KBM-7 (cell line): ENCODE measurements at regions of chr2 and their contacts with region 1.

Region 1: GRCh38 chr2:181715033-181715630 is 34.8 kb upstream of the NEUROD1 start:
- DNase-seq: peak; percentile 89

Region 2: GRCh38 chr2:180776921-180777320 is 938.2 kb before region 1 on chr2:
- in situ Hi-C with region 1: no loop called
- DNase-seq: no peak

Region 3: GRCh38 chr2:181085734-181086133 is 629.4 kb before region 1 on chr2:
- in situ Hi-C with region 1: loop called (anchors 10 kb)
- DNase-seq: no peak

Region 4: DNA sequence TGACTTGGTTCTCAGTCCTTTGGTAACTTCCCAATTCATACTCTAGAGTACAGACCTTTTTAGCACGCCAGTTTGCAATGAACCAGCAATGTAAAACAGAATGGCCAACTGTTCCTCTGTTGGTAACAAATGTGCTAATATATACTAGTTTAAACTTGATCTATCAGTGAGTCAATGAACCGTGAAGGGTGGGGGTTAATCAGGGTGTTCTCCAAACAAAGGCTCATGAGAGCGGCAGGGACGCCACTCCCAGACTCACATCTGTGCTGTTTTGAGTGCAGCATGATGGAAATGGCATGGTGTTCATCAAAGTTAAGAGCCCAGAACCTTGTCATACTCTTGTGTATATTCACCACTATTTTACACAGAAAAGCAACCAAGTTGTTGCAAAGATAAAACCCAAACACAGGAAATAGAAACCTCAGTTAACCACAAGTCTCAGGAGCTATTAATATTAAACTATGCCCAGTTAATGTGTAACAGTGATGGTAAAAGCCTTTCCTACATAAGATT is 128.5 kb before region 1 on chr2:
- in situ Hi-C with region 1: loop called (anchors 25 kb)
- DNase-seq: no peak